Activated CD4-positive, alpha-beta memory T cell treated with anti-CD3 and anti-CD28 coated beads, Interleukin-2, amount 10 ng/mL, durations not matched to agents 7 days and 5 days (primary cell): ENCODE measurements at regions of chr5 and their contacts with region 1.

Region 1: GRCh38 chr5:179697993-179698934 is 503 bp upstream of the CANX start:
- DNase-seq: peak; percentile 99
- H3K4me3 Mint-ChIP-seq: peak overlapping the region; percentile 99
- H3K27ac Mint-ChIP-seq: peak overlapping the region; percentile 98
- H3K4me1 Mint-ChIP-seq: peaks cover 40% of the 10 kb centered on the region
- H3K27me3 Mint-ChIP-seq: no peaks in the 10 kb centered on the region

Region 2: GRCh38 chr5:179732417-179732917 is 34.2 kb after region 1 on chr5 and contains the start of gene MAML1:
- CTCF ChIA-PET with region 1: interaction called, 5 read pairs
- POLR2A ChIA-PET with region 1: interaction called, 22 read pairs
- DNase-seq: peak; percentile 100
- H3K4me3 Mint-ChIP-seq: peak within 1 kb of the TSS; percentile 96
- H3K27ac Mint-ChIP-seq: peak within 1 kb of the TSS; percentile 87
- H3K4me1 Mint-ChIP-seq: peaks cover 37% of the 10 kb centered on the region
- H3K27me3 Mint-ChIP-seq: no peaks in the 10 kb centered on the region
- total RNA-seq, gene MAML1: 33.3 to 35.2 TPM

Region 3: DNA sequence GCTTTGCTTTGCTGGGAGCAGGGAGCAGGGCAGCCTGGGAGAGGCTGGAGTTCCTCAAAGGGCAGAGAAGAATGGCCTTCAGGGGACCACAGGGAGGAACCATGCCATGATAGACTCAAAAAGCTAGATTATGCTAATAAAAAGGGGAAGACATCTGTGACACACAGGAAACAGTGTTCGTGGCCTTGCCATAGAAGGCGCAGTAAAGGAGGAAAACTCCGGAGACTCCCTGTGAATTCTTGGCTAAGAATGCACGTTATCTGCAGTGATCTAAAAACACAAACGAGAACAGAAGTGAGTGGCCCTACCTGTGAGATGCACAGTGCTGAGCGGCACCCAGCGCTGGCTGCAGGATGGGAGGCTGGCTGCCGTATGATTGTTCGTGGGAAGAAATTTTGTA is 79.6 kb after region 1 on chr5:
- CTCF ChIA-PET with region 1: no interaction called
- POLR2A ChIA-PET with region 1: no interaction called
- DNase-seq: no peak
- H3K4me3 Mint-ChIP-seq: no peak overlapping the region
- H3K27ac Mint-ChIP-seq: no peak overlapping the region
- H3K4me1 Mint-ChIP-seq: no peaks in the 10 kb centered on the region
- H3K27me3 Mint-ChIP-seq: no peaks in the 10 kb centered on the region